ENCODE measurements at regions of chr12 and their contacts with region 1.

Region 1: GRCh38 chr12:43848786-43849185 is 12.9 kb downstream of the TMEM117 start:
- DNase-seq: peak; percentile 47 to 48
- H3K4me3 ChIP-seq: no peak overlapping the region
- H3K4me3 Mint-ChIP-seq: peak overlapping the region; percentile 56
- H3K27ac Mint-ChIP-seq: peak overlapping the region; percentile 85
- H3K4me1 ChIP-seq: peaks cover 64% of the 10 kb centered on the region
- H3K4me1 Mint-ChIP-seq: peaks cover 51% of the 10 kb centered on the region
- H3K27me3 ChIP-seq: no peaks in the 10 kb centered on the region
- H3K27me3 Mint-ChIP-seq: no peaks in the 10 kb centered on the region
- CTCF ChIP-seq: no peak

Region 2: GRCh38 chr12:43776498-43776897 is 72.3 kb before region 1 on chr12:
- CTCF ChIA-PET with region 1: no interaction called
- POLR2A ChIA-PET with region 1: no interaction called
- intact Hi-C with region 1: loop called (anchors 5 kb)
- DNase-seq: peak in 1 of 2 experiments; percentile 59
- H3K4me3 ChIP-seq: no peak overlapping the region
- H3K4me3 Mint-ChIP-seq: no peak overlapping the region
- H3K27ac Mint-ChIP-seq: no peak overlapping the region
- H3K4me1 ChIP-seq: no peaks in the 10 kb centered on the region
- H3K4me1 Mint-ChIP-seq: no peaks in the 10 kb centered on the region
- H3K27me3 ChIP-seq: no peaks in the 10 kb centered on the region
- H3K27me3 Mint-ChIP-seq: no peaks in the 10 kb centered on the region
- CTCF ChIP-seq: peak; percentile 69 to 83

Region 3: GRCh38 chr12:43795716-43796288 is 53.0 kb before region 1 on chr12:
- CTCF ChIA-PET with region 1: no interaction called
- POLR2A ChIA-PET with region 1: no interaction called
- intact Hi-C with region 1: loop called (anchors 1 kb)
- DNase-seq: peak; percentile 46 to 72
- H3K4me3 ChIP-seq: no peak overlapping the region
- H3K4me3 Mint-ChIP-seq: no peak overlapping the region
- H3K27ac Mint-ChIP-seq: peak overlapping the region; percentile 70
- H3K4me1 ChIP-seq: peaks cover 19% of the 10 kb centered on the region
- H3K4me1 Mint-ChIP-seq: peaks cover 26% of the 10 kb centered on the region
- H3K27me3 ChIP-seq: no peaks in the 10 kb centered on the region
- H3K27me3 Mint-ChIP-seq: no peaks in the 10 kb centered on the region
- CTCF ChIP-seq: no peak

Region 4: GRCh38 chr12:43835656-43836474 is 12.9 kb before region 1 on chr12 and contains the start of gene TMEM117:
- CTCF ChIA-PET with region 1: no interaction called
- POLR2A ChIA-PET with region 1: interaction called, 4 read pairs
- intact Hi-C with region 1: loop called (anchors 1 kb)
- DNase-seq: peak; percentile 75 to 80
- H3K4me3 ChIP-seq: peak within 1 kb of the TSS; percentile 59
- H3K4me3 Mint-ChIP-seq: peak within 1 kb of the TSS; percentile 81
- H3K27ac Mint-ChIP-seq: peak within 1 kb of the TSS; percentile 87
- H3K4me1 ChIP-seq: peaks cover 28% of the 10 kb centered on the region
- H3K4me1 Mint-ChIP-seq: peaks cover 31% of the 10 kb centered on the region
- H3K27me3 ChIP-seq: no peaks in the 10 kb centered on the region
- H3K27me3 Mint-ChIP-seq: no peaks in the 10 kb centered on the region
- CTCF ChIP-seq: no peak
- total RNA-seq, gene TMEM117: 28.0 and 34.1 TPM in 2 replicates

Region 5: DNA sequence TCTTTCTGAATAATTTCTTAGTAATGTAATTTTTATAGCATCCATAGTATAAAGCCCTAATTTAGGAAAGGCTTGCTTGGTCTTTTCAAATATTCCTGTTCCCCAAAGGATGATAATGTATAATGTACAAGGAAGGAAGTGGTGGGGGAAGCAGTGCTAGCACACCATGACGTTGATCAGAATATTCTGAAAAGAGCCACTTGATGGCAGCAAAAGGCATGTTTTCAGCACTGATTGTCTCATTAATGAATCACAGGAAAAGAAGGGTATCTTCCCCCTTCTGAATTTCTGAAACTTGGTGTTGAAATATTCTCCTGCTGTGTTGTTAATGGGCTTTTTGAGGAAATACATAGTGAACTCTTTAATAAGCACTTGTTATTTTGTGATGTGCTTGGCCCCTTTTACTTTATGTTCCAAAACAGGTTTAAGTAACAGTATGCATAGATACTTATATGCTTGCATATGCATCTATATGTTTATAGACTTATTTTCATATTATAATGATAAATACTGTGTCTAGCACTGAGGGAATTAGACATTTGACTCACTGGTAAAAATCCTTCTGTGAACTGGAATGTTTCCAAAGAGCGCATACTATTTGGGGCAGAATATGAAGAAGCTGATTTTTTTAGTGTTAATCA is 109.1 kb after region 1 on chr12:
- CTCF ChIA-PET with region 1: no interaction called
- POLR2A ChIA-PET with region 1: no interaction called
- intact Hi-C with region 1: no loop called
- DNase-seq: peak in 1 of 2 experiments; percentile 66
- H3K4me3 ChIP-seq: no peak overlapping the region
- H3K4me3 Mint-ChIP-seq: no peak overlapping the region
- H3K27ac Mint-ChIP-seq: no peak overlapping the region
- H3K4me1 ChIP-seq: no peaks in the 10 kb centered on the region; the same call in 1 of the 2 replicates
- H3K4me1 Mint-ChIP-seq: peaks cover 6% of the 10 kb centered on the region
- H3K27me3 ChIP-seq: no peaks in the 10 kb centered on the region
- H3K27me3 Mint-ChIP-seq: no peaks in the 10 kb centered on the region
- CTCF ChIP-seq: peak; percentile 56 to 69